ENCODE measurements at regions of chr16 and their contacts with region 1.

Region 1: GRCh38 chr16:3029537-3030402 is 5.9 kb downstream of the THOC6 start:
- DNase-seq: peak in 2 of 3 donors; percentile 39 to 63
- H3K4me3 ChIP-seq: peak overlapping the region in 1 of 3 experiments; percentile 32
- H3K4me3 Mint-ChIP-seq: peak overlapping the region; percentile 31 to 86
- H3K27ac ChIP-seq: no peak overlapping the region
- H3K27ac Mint-ChIP-seq: peak overlapping the region in 2 of 7 donors; percentile 4 to 35
- H3K4me1 ChIP-seq: peaks cover 23 to 31% of the 10 kb centered on the region in 2 donors
- H3K4me1 Mint-ChIP-seq: peaks cover 39% of the 10 kb centered on the region
- H3K27me3 ChIP-seq: peaks cover 23 to 63% of the 10 kb centered on the region in 2 donors
- H3K27me3 Mint-ChIP-seq: peaks cover 54 to 66% (median 64%) of the 10 kb centered on the region in 3 donors
- CTCF ChIP-seq: no peak

Region 2: GRCh38 chr16:2996298-2996697 is 33.5 kb before region 1 on chr16:
- intact Hi-C with region 1: loop called in 1 of 2 experiments (anchors 5 kb)
- DNase-seq: no peak
- H3K4me3 ChIP-seq: no peak overlapping the region
- H3K4me3 Mint-ChIP-seq: no peak overlapping the region
- H3K27ac ChIP-seq: no peak overlapping the region
- H3K27ac Mint-ChIP-seq: no peak overlapping the region
- H3K4me1 ChIP-seq: no peaks in the 10 kb centered on the region
- H3K4me1 Mint-ChIP-seq: no peaks in the 10 kb centered on the region
- H3K27me3 ChIP-seq: no peaks in the 10 kb centered on the region
- H3K27me3 Mint-ChIP-seq: peaks cover 0 to 13% (median 8%) of the 10 kb centered on the region in 3 donors
- CTCF ChIP-seq: no peak